Mammary epithelial cell (primary cell): ENCODE measurements at regions of chr6 and their contacts with region 1.

Region 1: DNA sequence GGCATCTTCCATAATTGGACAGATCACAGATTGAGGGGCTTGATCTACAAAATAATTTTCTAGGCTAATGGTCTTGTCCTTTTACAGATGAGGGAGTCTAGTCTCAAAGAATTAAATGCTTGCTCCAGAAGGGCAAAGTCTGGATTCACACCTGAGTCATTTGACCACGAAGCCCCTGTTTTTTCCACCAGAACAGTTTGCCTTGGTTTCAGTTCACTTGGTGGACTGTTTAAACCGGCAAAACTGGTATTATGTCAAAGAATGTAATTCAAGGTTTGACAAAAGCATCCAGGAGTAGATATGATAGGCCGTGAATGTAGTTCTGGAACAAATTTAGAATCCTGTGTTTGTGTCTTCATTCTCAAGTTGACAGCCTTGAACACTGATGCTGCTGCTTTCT is 3.3 kb downstream of the MYO6 start:
- DNase-seq: peak; percentile 75
- H3K4me3 ChIP-seq: no peak overlapping the region
- H3K27ac ChIP-seq: peak overlapping the region; percentile 95
- H3K4me1 ChIP-seq: peaks cover 26% of the 10 kb centered on the region
- H3K27me3 ChIP-seq: no peaks in the 10 kb centered on the region
- CTCF ChIP-seq: no peak

Region 2: DNA sequence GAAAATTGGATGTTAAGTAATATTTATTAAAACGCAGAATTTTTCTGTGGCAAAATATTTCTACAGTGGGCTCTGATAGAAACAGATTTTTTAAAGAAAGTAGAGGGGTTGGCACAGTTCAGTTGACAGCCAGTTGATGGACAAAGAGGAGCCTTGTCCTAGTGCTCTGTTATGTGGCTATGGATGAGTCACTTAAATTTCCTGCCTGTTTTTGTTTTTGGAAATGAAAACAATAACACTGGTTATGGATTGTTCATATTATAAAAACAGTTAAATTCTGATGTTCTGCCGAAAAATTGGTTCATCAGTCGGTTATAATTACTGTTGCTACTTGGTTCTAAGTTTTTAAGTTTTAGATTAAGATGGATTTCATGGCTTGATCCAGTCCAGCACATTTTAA is 39.5 kb after region 1 on chr6:
- CTCF ChIA-PET with region 1: no interaction called
- dilution Hi-C with region 1: no loop called
- in situ Hi-C with region 1: no loop called
- intact Hi-C with region 1: loop called (anchors 5 kb)
- DNase-seq: peak; percentile 40
- H3K4me3 ChIP-seq: no peak overlapping the region
- H3K27ac ChIP-seq: no peak overlapping the region
- H3K4me1 ChIP-seq: peaks cover 9% of the 10 kb centered on the region
- H3K27me3 ChIP-seq: no peaks in the 10 kb centered on the region
- CTCF ChIP-seq: no peak